OCI-LY7 (cell line): ENCODE measurements at regions of chr4 and their contacts with region 1.

Region 1: DNA sequence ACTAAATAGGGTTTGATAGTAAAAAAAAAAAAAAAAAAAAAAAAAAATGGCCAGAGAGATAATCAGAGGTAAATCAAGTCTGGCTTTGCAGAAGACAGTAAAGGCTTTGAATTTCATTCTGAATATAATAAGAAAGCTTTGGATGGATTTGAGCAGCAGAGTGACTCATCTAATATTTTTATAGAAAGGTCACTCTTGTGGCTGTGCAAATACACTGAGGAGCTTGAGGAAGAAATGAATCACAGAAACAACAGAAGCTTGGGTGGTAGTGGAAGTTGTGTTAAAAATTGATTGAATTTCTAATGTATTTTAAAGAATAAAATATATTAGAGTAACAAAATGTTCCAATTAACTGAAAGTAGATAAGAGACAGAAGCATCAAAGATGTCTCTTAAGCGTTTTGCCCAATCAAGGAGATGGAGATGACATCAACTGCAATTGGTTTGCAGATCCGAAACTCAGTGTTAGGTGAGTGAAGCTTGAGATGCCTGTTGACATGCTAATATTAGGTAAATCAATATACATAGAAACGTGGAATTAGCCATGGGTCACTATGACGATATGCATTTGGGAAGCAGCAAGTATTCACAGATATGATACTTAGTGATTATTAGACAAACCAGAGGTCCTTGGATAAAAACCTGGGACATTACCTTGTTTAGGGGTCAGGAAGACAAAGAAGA is 280.5 kb downstream of the GPM6A start:
- DNase-seq: no peak
- H3K4me3 ChIP-seq: no peak overlapping the region
- H3K27ac ChIP-seq: no peak overlapping the region
- H3K4me1 ChIP-seq: peaks cover 4% of the 10 kb centered on the region
- CTCF ChIP-seq: no peak

Region 2: DNA sequence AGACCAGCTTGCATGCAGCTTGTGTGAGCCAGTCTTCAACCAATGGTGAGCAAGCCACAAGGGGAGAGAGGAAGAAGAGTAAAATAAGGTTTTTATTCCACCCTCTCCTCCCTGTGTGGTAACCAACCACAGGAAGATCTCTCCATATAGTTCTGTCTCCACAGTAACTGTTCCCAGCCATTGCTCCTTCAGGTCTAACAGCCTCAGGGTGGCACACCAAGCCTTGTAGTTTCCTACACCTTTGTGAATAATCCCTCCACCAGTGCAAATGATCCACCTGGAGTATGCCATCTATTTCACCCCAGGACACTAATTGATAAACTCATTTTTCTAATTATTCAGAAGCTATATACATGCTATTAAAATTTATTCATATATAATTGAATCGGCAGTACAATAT is 250.7 kb before region 1 on chr4:
- CTCF ChIA-PET with region 1: no interaction called
- POLR2A ChIA-PET with region 1: no interaction called
- intact Hi-C with region 1: loop called (anchors 5 kb)
- DNase-seq: no peak
- H3K4me3 ChIP-seq: no peak overlapping the region
- H3K27ac ChIP-seq: no peak overlapping the region
- H3K4me1 ChIP-seq: no peaks in the 10 kb centered on the region
- CTCF ChIP-seq: no peak